T-cell (primary cell): ENCODE measurements at regions of chr1 and their contacts with region 1.

Region 1: GRCh38 chr1:167491586-167492461 is 26.5 kb downstream of the CD247 start:
- DNase-seq: peak in 4 of 35 experiments; percentile 19 to 72 (median 35)
- ATAC-seq: peak; percentile 43 to 48 (median 46)
- H3K4me3 ChIP-seq: peak overlapping the region; percentile 17 to 41
- H3K4me3 Mint-ChIP-seq: peak overlapping the region; percentile 66 to 98 (median 72)
- H3K27ac ChIP-seq: peak overlapping the region; percentile 81
- H3K27ac Mint-ChIP-seq: peak overlapping the region; percentile 90 to 97
- H3K4me1 ChIP-seq: peaks cover 65 to 93% of the 10 kb centered on the region in 2 experiments
- H3K4me1 Mint-ChIP-seq: peaks cover 96 to 100% (median 96%) of the 10 kb centered on the region in 3 donors
- H3K27me3 ChIP-seq: no peaks in the 10 kb centered on the region
- H3K27me3 Mint-ChIP-seq: no peaks in the 10 kb centered on the region

Region 2: GRCh38 chr1:167161242-167161641 is 330.6 kb before region 1 on chr1:
- CTCF ChIA-PET with region 1: no interaction called
- POLR2A ChIA-PET with region 1: no interaction called
- DNase-seq: no peak
- ATAC-seq: no peak
- H3K4me3 ChIP-seq: no peak overlapping the region
- H3K4me3 Mint-ChIP-seq: no peak overlapping the region
- H3K27ac ChIP-seq: no peak overlapping the region
- H3K27ac Mint-ChIP-seq: no peak overlapping the region
- H3K4me1 ChIP-seq: peaks cover 3 to 5% of the 10 kb centered on the region in 2 experiments
- H3K4me1 Mint-ChIP-seq: peaks cover 9 to 13% (median 13%) of the 10 kb centered on the region in 3 donors
- H3K27me3 ChIP-seq: peaks cover 0 to 5% of the 10 kb centered on the region in 2 experiments
- H3K27me3 Mint-ChIP-seq: peaks cover 10 to 11% of the 10 kb centered on the region in 2 donors

Region 3: DNA sequence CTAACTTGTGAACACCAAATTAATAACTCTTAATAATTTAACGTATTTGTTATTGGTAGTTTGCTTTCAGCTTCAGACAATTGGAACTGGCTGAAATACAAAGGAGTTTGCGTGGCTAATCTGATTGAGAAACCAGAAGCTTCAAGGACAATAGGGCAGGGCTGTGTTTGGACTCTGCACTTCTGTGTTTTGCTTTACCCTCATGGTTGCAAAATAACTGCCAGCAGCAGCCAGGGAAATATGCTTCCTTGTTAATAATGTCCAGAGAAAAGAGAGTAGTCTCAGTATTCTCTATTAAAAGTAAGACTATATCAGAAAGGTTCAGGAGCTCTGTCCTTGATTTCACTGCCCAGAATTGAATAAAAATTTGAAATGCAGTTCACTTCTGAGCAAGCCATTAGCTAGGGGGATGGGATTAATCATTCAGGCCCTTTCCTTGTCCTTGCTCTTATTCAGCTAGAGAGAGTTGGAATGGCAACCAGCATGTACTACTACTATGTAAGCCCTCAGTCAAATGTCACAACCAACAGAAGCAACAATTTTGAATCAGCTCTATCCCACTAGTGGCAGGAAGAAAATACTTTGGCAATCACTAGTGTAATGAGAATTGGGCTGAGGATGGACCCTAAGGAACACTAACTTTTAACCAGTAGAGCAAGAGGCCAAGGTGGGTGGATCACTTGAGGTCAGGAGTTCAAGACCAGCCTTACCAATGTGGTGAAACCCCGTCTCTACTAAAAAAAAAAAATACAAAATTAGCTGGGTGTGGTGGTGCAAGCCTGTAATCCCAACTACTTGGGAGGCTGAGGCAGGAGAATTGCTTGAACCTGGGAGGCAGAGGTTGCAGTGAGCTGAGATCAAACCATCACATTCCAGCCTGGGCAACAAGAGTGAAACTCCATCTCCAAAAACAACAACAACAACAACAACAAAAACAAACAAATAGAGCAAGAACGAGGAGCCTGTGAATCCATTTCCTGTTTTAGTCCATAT is 194.3 kb before region 1 on chr1:
- CTCF ChIA-PET with region 1: no interaction called
- POLR2A ChIA-PET with region 1: no interaction called
- DNase-seq: no peak
- ATAC-seq: no peak
- H3K4me3 ChIP-seq: no peak overlapping the region
- H3K4me3 Mint-ChIP-seq: no peak overlapping the region
- H3K27ac ChIP-seq: no peak overlapping the region
- H3K27ac Mint-ChIP-seq: no peak overlapping the region
- H3K4me1 ChIP-seq: no peaks in the 10 kb centered on the region
- H3K4me1 Mint-ChIP-seq: peaks cover 22 to 35% (median 23%) of the 10 kb centered on the region in 3 donors
- H3K27me3 ChIP-seq: no peaks in the 10 kb centered on the region
- H3K27me3 Mint-ChIP-seq: no peaks in the 10 kb centered on the region

Region 4: GRCh38 chr1:167881069-167881468 is 389.2 kb after region 1 on chr1:
- CTCF ChIA-PET with region 1: no interaction called
- POLR2A ChIA-PET with region 1: no interaction called
- DNase-seq: no peak
- ATAC-seq: no peak
- H3K4me3 ChIP-seq: no peak overlapping the region
- H3K4me3 Mint-ChIP-seq: no peak overlapping the region
- H3K27ac ChIP-seq: no peak overlapping the region
- H3K27ac Mint-ChIP-seq: no peak overlapping the region
- H3K4me1 ChIP-seq: no peaks in the 10 kb centered on the region
- H3K4me1 Mint-ChIP-seq: no peaks in the 10 kb centered on the region
- H3K27me3 ChIP-seq: peaks cover 0 to 2% of the 10 kb centered on the region in 2 experiments
- H3K27me3 Mint-ChIP-seq: peaks cover 0 to 4% of the 10 kb centered on the region in 2 donors

Region 5: GRCh38 chr1:168136709-168137514 is 645.1 kb after region 1 on chr1 and contains the start of gene GPR161:
- CTCF ChIA-PET with region 1: no interaction called
- POLR2A ChIA-PET with region 1: no interaction called
- DNase-seq: peak in 12 of 35 experiments; percentile 4 to 34 (median 19)
- ATAC-seq: peak; percentile 37 to 75 (median 59)
- H3K4me3 ChIP-seq: peak within 1 kb of the TSS; percentile 60 to 70
- H3K4me3 Mint-ChIP-seq: peak within 1 kb of the TSS; percentile 87 to 97 (median 87)
- H3K27ac ChIP-seq: no peak within 1 kb of the TSS
- H3K27ac Mint-ChIP-seq: peak within 1 kb of the TSS; percentile 5 to 16
- H3K4me1 ChIP-seq: peaks cover 4 to 21% of the 10 kb centered on the region in 2 experiments
- H3K4me1 Mint-ChIP-seq: peaks cover 18 to 22% (median 22%) of the 10 kb centered on the region in 3 donors
- H3K27me3 ChIP-seq: peaks cover 15 to 29% of the 10 kb centered on the region in 2 experiments
- H3K27me3 Mint-ChIP-seq: peaks cover 26 to 33% of the 10 kb centered on the region in 2 donors
- total RNA-seq, gene GPR161: 0.09 to 0.39 (median 0.29) TPM

Region 6: GRCh38 chr1:168706391-168706992 is 1214.7 kb after region 1 on chr1:
- CTCF ChIA-PET with region 1: no interaction called
- POLR2A ChIA-PET with region 1: interaction called in 1 of 2 experiments, 10 read pairs
- DNase-seq: no peak
- ATAC-seq: no peak
- H3K4me3 ChIP-seq: no peak overlapping the region
- H3K4me3 Mint-ChIP-seq: no peak overlapping the region
- H3K27ac ChIP-seq: no peak overlapping the region
- H3K27ac Mint-ChIP-seq: no peak overlapping the region
- H3K4me1 ChIP-seq: no peaks in the 10 kb centered on the region
- H3K4me1 Mint-ChIP-seq: no peaks in the 10 kb centered on the region
- H3K27me3 ChIP-seq: no peaks in the 10 kb centered on the region
- H3K27me3 Mint-ChIP-seq: peaks cover 2 to 26% of the 10 kb centered on the region in 2 donors